ENCODE measurements at regions of chr18 and their contacts with region 1.

Region 1: GRCh38 chr18:5057386-5058348 is 139.4 kb downstream of the AKAIN1 start:
- DNase-seq: peak; percentile 24
- ATAC-seq: peak; percentile 88
- H3K4me3 ChIP-seq: no peak overlapping the region
- H3K27ac ChIP-seq: no peak overlapping the region
- H3K4me1 ChIP-seq: no peaks in the 10 kb centered on the region
- H3K27me3 ChIP-seq: no peaks in the 10 kb centered on the region
- CTCF ChIP-seq: peak; percentile 90

Region 2: DNA sequence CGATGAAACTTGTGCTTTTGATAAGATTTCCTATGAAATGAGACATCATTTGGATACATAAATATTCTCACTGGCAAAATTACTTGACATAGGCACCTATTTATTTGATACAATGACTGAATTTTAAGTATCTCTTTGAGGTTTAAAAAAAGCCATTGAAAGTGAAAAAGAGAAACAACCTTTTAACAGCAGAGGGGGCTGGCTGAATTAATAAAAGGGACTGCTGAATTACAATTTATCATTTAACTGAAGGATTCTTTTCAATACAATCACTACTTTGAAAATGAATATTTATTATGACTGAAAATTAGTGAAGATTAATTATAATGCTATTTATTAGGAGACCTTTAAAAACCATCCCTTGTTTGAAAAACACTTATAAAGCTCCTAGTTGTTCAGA is 937.9 kb before region 1 on chr18:
- CTCF ChIA-PET with region 1: no interaction called
- POLR2A ChIA-PET with region 1: no interaction called
- in situ Hi-C with region 1: no loop called
- intact Hi-C with region 1: loop called (anchors 10 kb)
- DNase-seq: no peak
- ATAC-seq: no peak
- H3K4me3 ChIP-seq: no peak overlapping the region
- H3K27ac ChIP-seq: no peak overlapping the region
- H3K4me1 ChIP-seq: no peaks in the 10 kb centered on the region
- H3K27me3 ChIP-seq: no peaks in the 10 kb centered on the region; the same call in 1 of the 2 replicates
- CTCF ChIP-seq: no peak

Measured in Panc1 (cell line).